Activated CD4-positive, alpha-beta memory T cell treated with anti-CD3 and anti-CD28 coated beads for 36 hours (primary cell): ENCODE measurements at regions of chr5 and their contacts with region 1.

Region 1: DNA sequence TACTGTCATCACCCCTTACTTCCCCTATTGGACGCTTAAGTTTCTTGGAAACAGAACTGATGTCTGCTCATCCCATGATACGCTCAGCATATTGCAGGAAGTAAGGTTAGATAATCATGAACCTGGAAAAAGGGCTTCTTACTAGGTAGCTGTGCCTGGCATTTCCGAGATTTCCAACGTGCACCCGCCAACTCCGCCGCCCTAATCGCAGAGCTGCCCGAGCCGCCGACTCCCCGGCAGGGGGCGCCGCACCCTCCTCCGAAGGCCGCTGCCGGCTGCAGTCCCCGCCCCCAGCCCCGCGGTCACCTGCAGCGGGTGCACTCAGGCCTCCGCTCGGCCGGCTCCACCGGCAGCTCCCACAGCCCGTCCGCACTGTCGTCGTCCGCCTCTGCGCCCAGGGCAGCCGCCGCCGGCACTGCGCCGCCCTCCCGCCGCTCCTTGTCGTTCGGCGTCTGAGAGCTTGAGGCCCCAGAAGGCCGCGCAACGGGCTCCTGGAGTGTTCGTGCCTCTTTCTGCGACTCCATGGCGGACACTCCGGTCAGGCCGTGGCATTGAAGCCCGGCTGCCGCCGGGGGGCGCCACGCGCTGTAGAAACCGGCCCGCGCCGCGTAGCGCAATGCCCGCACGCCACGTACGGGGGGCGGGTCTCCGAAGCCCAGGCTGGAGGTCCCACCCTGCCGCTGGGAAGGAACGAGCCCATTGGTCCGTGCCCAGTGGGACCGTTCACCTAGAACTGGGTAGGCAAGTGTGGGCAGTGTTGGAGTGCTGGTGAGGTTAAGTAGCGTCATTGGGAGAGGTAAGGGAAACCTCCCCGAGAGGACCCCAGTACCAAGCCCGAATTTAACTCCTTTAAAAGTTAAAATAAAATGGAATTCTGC is at the start of gene DTWD2:
- DNase-seq: peak; percentile 95
- H3K4me3 Mint-ChIP-seq: peak within 1 kb of the TSS; percentile 70
- H3K27ac Mint-ChIP-seq: peak within 1 kb of the TSS; percentile 40
- H3K4me1 Mint-ChIP-seq: peaks cover 14% of the 10 kb centered on the region
- H3K27me3 Mint-ChIP-seq: no peaks in the 10 kb centered on the region
- total RNA-seq, gene DTWD2: 2.3 to 2.8 TPM

Region 2: GRCh38 chr5:118711727-118712126 is 276.5 kb before region 1 on chr5:
- CTCF ChIA-PET with region 1: no interaction called
- POLR2A ChIA-PET with region 1: no interaction called
- intact Hi-C with region 1: no loop called
- DNase-seq: no peak
- H3K4me3 Mint-ChIP-seq: no peak overlapping the region
- H3K27ac Mint-ChIP-seq: no peak overlapping the region
- H3K4me1 Mint-ChIP-seq: no peaks in the 10 kb centered on the region
- H3K27me3 Mint-ChIP-seq: no peaks in the 10 kb centered on the region

Region 3: DNA sequence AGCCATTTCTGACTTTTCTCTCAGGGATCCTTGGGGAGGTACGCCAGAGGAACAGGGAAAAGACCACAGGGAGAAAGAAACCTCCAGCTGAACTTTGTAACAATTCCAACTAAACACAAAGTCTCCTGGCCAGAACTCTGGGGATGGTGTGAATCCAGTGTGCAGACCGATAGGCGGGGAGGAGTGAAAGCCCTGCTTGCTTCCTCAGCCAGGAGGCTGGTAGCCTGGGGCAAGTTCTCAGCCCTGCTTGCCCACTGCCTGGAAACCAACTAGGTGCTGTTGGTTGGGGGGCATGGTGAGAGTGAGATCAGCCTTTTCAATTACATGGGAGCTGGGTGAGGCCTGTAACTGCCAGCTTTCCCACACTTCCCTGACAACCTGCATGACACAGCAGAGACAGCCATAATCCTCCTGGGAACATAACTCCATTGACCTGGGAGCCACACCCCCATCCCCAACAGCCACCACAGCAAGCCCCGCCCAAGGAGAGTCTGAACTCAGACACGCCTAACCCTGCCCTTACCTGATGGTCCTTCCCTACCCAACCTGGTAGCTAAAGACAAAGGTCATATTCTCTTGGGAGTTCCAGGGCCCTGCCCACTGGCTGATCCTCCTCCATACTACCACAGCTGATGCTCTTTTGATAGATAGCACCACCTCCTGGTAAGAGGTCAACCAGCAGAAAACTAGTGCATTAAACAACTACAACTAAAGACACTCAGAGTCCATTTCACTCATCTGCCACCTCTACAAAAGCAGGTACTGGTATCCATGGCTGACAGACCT is 267.5 kb after region 1 on chr5:
- CTCF ChIA-PET with region 1: interaction called, 26 read pairs
- POLR2A ChIA-PET with region 1: no interaction called
- intact Hi-C with region 1: loop called (anchors 1 kb)
- DNase-seq: no peak
- H3K4me3 Mint-ChIP-seq: no peak overlapping the region
- H3K27ac Mint-ChIP-seq: no peak overlapping the region
- H3K4me1 Mint-ChIP-seq: peaks cover 4% of the 10 kb centered on the region
- H3K27me3 Mint-ChIP-seq: no peaks in the 10 kb centered on the region

Region 4: GRCh38 chr5:119340597-119341218 is 352.5 kb after region 1 on chr5:
- CTCF ChIA-PET with region 1: interaction called, 5 read pairs
- POLR2A ChIA-PET with region 1: no interaction called
- intact Hi-C with region 1: loop called (anchors 5 kb)
- DNase-seq: peak; percentile 78
- H3K4me3 Mint-ChIP-seq: peak overlapping the region; percentile 66
- H3K27ac Mint-ChIP-seq: peak overlapping the region; percentile 93
- H3K4me1 Mint-ChIP-seq: peaks cover 94% of the 10 kb centered on the region
- H3K27me3 Mint-ChIP-seq: no peaks in the 10 kb centered on the region

Region 5: DNA sequence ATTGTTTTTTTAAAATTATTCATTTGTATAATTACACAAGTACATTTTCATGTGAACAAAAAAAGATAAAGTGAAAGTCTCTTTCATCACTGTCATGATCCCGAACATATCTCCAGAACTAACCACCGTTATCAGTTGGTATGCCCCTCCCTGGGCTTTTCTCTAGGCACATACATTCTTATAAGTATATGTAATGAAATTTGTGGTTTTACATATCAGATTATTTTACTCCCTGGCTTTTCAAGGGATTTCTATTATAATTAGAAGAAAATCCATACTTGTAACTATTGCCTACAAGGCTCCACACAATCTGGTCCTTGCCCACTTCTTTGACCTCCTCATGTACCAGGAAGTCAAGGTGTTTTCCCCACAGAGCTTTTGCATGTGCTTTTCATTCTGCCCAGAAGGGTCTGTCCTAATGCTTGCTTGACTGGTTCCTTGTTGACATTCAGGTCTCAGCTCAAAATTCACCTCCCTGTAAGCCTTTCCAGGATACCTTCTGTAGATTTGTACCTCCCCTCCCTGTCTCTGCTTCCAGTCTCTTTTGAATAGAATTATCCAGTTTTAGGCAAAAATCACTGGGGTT is 430.4 kb after region 1 on chr5:
- CTCF ChIA-PET with region 1: interaction called, 143 read pairs
- POLR2A ChIA-PET with region 1: interaction called, 3 read pairs
- intact Hi-C with region 1: no loop called
- DNase-seq: no peak
- H3K4me3 Mint-ChIP-seq: no peak overlapping the region
- H3K27ac Mint-ChIP-seq: no peak overlapping the region
- H3K4me1 Mint-ChIP-seq: peaks cover 10% of the 10 kb centered on the region
- H3K27me3 Mint-ChIP-seq: peaks cover 2% of the 10 kb centered on the region

Region 6: DNA sequence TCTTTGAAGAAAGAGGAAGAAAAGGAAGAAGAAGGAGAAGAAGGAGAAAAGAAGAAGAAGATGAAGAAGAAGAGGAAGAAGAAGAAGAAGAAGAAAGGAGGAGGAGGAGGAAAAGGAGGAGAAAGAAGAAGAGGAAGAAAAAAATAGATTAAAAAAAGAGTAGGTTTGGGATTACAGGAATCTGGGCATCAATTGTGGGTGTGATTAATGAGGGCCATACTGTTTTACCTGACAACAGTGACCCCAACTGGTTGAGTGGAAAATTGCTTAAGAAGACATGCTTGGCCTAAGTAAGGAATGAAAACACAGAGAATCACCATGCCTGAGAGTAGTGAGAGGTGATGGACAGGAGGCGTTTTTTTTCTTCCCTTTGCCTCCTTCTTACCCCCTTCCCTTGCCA is 755.7 kb after region 1 on chr5:
- CTCF ChIA-PET with region 1: interaction called, 6 read pairs
- POLR2A ChIA-PET with region 1: no interaction called
- intact Hi-C with region 1: loop called (anchors 2 kb)
- DNase-seq: no peak
- H3K4me3 Mint-ChIP-seq: no peak overlapping the region
- H3K27ac Mint-ChIP-seq: no peak overlapping the region
- H3K4me1 Mint-ChIP-seq: no peaks in the 10 kb centered on the region
- H3K27me3 Mint-ChIP-seq: peaks cover 5% of the 10 kb centered on the region